ENCODE measurements at regions of chr16 and their contacts with region 1.

Region 1: DNA sequence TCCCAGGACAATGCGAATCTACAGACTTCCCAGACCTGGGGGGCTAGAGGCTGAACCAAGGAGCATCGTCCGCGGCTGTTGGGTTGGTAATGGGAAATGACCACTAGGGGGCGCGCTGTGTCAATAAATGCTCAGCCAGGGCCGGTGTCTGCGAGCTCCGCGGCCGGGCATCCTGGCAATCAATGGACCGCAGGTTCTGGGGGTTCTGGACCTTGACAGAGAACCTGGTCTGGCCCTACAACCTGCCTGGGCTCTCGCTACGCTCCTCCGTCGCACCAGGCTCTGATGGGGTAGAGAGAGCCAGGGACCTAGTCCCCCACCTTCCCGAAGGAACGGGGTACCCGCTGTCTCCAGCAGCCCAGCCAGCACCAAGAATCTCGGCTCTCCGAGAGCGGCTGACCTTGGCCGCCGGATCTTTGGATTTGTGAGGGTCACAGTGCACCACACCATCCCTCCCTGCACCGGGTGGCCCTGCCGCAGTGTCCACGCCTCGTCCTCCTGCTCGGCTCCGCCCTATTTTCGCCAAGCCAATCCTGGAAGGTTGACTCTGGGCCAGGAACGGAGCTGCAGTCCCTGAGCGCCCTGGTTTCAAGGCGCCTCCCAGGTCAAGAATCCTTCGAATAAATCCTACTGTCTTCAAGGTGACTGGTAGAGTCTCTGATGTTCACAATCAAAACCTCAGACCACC is 20.4 kb upstream of the BEAN1 start:
- DNase-seq: peak; percentile 94
- H3K4me3 Mint-ChIP-seq: peak overlapping the region; percentile 83
- H3K27ac Mint-ChIP-seq: no peak overlapping the region
- H3K4me1 Mint-ChIP-seq: peaks cover 26% of the 10 kb centered on the region
- H3K27me3 Mint-ChIP-seq: no peaks in the 10 kb centered on the region

Region 2: DNA sequence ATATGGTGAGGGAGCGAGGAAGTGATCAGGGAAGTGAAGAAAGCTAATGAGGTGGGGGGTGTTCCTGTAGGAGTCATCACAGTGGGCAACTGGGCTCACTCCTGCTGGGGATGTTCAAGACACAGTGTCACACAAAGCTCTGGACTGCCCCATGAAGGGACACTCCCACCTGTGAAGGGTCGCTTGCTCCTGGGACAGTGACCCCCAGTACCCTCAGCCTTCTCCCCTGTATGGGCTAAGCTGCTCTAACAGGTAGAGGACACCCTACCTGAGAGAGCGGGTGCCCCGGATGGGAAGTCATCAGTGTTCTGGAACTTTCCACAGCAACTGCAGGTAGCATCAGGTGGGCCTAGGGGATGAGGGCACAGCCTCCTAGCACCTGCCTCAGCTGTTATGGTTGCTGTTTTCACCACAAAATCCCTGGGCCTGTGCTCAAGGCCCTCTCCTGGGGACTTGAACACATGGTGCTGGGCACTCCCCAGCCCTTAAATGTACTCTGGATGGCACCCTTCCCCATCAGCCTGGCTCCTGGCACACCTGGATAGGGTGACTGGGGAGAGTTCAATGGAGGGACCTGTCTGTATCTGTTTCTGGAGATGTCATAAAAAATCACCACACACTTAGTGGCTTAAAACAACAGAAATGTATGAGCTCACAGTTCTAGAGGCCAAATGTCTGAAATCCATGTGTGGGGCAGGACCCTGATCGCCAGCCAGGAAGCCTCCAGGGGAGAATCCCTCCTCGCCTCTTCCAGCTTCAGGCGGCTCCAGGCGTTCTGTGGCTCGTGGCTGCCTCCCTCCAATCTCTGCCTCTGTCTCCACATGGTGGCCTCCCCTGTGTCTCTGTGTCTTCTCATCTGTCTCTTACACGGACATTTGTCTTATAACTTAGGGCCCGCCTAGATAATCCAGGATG is 144.2 kb before region 1 on chr16:
- CTCF ChIA-PET with region 1: no interaction called
- intact Hi-C with region 1: no loop called
- DNase-seq: no peak
- H3K4me3 Mint-ChIP-seq: no peak overlapping the region
- H3K27ac Mint-ChIP-seq: no peak overlapping the region
- H3K4me1 Mint-ChIP-seq: peaks cover 4% of the 10 kb centered on the region
- H3K27me3 Mint-ChIP-seq: peaks cover 18% of the 10 kb centered on the region

Region 3: DNA sequence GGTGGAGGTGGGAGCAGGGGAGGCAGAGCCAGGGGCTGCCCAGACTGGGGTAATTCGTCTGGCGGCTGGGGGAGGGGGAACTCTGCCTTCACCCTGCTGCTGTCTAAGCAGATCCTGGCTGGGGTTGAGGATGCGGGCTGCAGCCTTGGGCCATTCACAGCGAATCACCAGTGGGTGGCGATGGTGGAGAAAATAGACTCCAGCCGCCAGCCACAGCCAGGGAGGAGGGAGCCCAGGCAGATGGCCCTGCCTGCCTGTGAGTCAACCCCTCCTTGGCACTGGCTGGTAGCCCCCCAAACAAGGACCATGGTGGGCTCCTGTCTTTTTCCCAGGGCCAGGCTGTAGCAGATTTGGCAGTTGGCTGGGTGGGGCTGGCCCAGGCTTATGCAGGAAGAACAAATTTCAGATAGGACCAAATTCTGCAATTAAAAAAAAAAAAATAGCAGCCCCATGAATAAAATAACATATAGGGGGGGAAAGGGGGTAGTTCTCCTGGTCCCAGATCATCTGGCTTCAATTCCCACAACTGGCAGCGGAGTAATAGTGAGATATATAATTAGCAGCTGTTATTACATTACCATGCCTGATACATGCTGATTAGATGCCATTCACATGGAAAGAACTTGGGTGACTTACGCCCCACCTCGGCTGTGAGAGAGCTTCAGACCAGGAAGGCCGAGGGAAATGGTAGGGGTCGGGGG is 81.7 kb before region 1 on chr16:
- CTCF ChIA-PET with region 1: no interaction called
- intact Hi-C with region 1: no loop called
- DNase-seq: no peak
- H3K4me3 Mint-ChIP-seq: no peak overlapping the region
- H3K27ac Mint-ChIP-seq: no peak overlapping the region
- H3K4me1 Mint-ChIP-seq: no peaks in the 10 kb centered on the region
- H3K27me3 Mint-ChIP-seq: peaks cover 2% of the 10 kb centered on the region

Region 4: GRCh38 chr16:66382966-66383299 is 23.7 kb before region 1 on chr16:
- CTCF ChIA-PET with region 1: no interaction called
- intact Hi-C with region 1: no loop called
- DNase-seq: no peak
- H3K4me3 Mint-ChIP-seq: no peak overlapping the region
- H3K27ac Mint-ChIP-seq: no peak overlapping the region
- H3K4me1 Mint-ChIP-seq: no peaks in the 10 kb centered on the region
- H3K27me3 Mint-ChIP-seq: no peaks in the 10 kb centered on the region

Region 5: GRCh38 chr16:66474750-66475199 is 68.1 kb after region 1 on chr16:
- CTCF ChIA-PET with region 1: interaction called, 94 read pairs
- intact Hi-C with region 1: loop called (anchors 2 kb)
- DNase-seq: peak; percentile 73
- H3K4me3 Mint-ChIP-seq: no peak overlapping the region
- H3K27ac Mint-ChIP-seq: peak overlapping the region; percentile 1
- H3K4me1 Mint-ChIP-seq: peaks cover 24% of the 10 kb centered on the region
- H3K27me3 Mint-ChIP-seq: no peaks in the 10 kb centered on the region

Region 6: DNA sequence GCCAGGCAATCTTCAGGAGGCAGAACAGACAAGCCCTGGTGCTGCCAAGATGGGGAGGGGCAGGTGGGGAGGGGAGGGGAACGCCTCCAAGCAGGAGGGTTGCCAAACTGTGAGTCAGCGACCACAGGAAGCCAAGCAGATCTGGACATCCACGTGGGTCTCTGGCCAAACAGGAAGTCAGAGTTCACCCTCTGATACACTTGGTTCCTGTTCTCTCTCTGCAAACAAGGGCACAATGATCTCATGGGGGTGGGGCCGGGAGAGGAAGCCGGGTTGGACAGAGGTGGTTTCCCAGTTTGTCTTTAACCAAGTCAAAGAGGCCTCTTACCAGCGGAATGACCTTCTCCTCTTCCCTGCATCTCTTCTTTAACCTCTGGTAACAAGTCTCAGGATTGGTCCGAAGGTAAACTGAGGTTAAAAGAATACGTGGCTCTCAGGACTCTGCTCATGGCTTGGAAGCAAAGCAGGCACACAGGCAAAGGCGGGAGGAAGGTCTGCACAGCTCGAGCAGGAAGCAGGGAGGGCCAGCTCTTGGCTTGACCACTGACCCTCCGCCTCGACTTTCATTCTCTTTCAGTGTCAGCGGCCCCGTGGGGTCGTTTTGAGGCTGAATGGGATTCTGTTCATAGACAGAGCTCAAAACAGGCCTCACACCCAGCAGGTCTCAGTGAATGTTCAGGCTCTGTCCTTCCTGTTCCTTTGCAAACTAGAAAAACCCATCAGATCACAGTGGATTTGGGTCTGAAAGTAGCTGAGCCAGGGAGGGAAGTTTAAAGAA is 110.3 kb after region 1 on chr16:
- CTCF ChIA-PET with region 1: interaction called, 6 read pairs
- intact Hi-C with region 1: loop called (anchors 1 kb)
- DNase-seq: peak; percentile 96
- H3K4me3 Mint-ChIP-seq: peak overlapping the region; percentile 68
- H3K27ac Mint-ChIP-seq: peak overlapping the region; percentile 93
- H3K4me1 Mint-ChIP-seq: peaks cover 60% of the 10 kb centered on the region
- H3K27me3 Mint-ChIP-seq: no peaks in the 10 kb centered on the region

Region 7: GRCh38 chr16:66562407-66562806 is 155.7 kb after region 1 on chr16:
- CTCF ChIA-PET with region 1: interaction called, 25 read pairs
- intact Hi-C with region 1: no loop called
- DNase-seq: no peak
- H3K4me3 Mint-ChIP-seq: no peak overlapping the region
- H3K27ac Mint-ChIP-seq: no peak overlapping the region
- H3K4me1 Mint-ChIP-seq: peaks cover 55% of the 10 kb centered on the region
- H3K27me3 Mint-ChIP-seq: no peaks in the 10 kb centered on the region

Region 8: GRCh38 chr16:66608241-66609138 is 201.8 kb after region 1 on chr16:
- CTCF ChIA-PET with region 1: interaction called, 9 read pairs
- intact Hi-C with region 1: loop called (anchors 1 kb)
- DNase-seq: peak; percentile 89
- H3K4me3 Mint-ChIP-seq: no peak overlapping the region
- H3K27ac Mint-ChIP-seq: no peak overlapping the region
- H3K4me1 Mint-ChIP-seq: peaks cover 33% of the 10 kb centered on the region
- H3K27me3 Mint-ChIP-seq: no peaks in the 10 kb centered on the region

Region 9: DNA sequence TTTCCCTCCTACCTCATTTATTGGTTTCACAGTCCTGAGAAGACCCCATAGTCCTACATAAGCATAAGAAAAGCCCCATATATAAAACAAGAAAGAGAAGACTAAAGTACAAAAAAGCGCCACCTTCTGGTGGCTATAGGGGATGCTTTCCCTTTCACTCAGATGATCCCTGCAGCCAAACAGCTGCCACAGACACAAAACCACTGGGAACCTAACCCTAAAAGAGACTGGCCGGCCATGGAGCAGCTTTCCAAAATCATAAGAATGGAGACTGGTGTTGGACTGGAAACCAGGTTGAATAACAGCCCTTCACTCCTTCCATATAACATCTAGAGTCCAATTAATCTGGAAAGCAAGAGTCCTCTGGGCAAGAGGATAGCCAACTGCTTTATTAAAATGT is 333.3 kb after region 1 on chr16:
- CTCF ChIA-PET with region 1: interaction called, 3 read pairs
- intact Hi-C with region 1: loop called (anchors 1 kb)
- DNase-seq: peak; percentile 50
- H3K4me3 Mint-ChIP-seq: no peak overlapping the region
- H3K27ac Mint-ChIP-seq: no peak overlapping the region
- H3K4me1 Mint-ChIP-seq: peaks cover 12% of the 10 kb centered on the region
- H3K27me3 Mint-ChIP-seq: no peaks in the 10 kb centered on the region

Region 10: GRCh38 chr16:66830422-66831404 is 424.0 kb after region 1 on chr16 and contains the start of gene NAE1:
- CTCF ChIA-PET with region 1: interaction called, 5 read pairs
- intact Hi-C with region 1: loop called (anchors 1 kb)
- DNase-seq: peak; percentile 87
- H3K4me3 Mint-ChIP-seq: peak within 1 kb of the TSS; percentile 74
- H3K27ac Mint-ChIP-seq: no peak within 1 kb of the TSS
- H3K4me1 Mint-ChIP-seq: peaks cover 32% of the 10 kb centered on the region
- H3K27me3 Mint-ChIP-seq: no peaks in the 10 kb centered on the region
- total RNA-seq, gene NAE1: 108 to 115 TPM